ENCODE measurements at regions of chr2 and their contacts with region 1.

Region 1: GRCh38 chr2:127064642-127065250 is 42.2 kb downstream of the BIN1 start:
- DNase-seq: peak; percentile 92 to 98 (median 97)
- H3K4me3 ChIP-seq: no peak overlapping the region
- H3K27ac ChIP-seq: peak overlapping the region; percentile 6 to 87 (median 85)
- H3K4me1 ChIP-seq: peaks cover 30 to 39% of the 10 kb centered on the region in 2 donors
- H3K27me3 ChIP-seq: no peaks in the 10 kb centered on the region
- CTCF ChIP-seq: peak in 4 of 6 experiments; percentile 7 to 16 (median 8)
- POLR2A ChIP-seq: peak in 1 of 2 donors; percentile 75

Region 2: DNA sequence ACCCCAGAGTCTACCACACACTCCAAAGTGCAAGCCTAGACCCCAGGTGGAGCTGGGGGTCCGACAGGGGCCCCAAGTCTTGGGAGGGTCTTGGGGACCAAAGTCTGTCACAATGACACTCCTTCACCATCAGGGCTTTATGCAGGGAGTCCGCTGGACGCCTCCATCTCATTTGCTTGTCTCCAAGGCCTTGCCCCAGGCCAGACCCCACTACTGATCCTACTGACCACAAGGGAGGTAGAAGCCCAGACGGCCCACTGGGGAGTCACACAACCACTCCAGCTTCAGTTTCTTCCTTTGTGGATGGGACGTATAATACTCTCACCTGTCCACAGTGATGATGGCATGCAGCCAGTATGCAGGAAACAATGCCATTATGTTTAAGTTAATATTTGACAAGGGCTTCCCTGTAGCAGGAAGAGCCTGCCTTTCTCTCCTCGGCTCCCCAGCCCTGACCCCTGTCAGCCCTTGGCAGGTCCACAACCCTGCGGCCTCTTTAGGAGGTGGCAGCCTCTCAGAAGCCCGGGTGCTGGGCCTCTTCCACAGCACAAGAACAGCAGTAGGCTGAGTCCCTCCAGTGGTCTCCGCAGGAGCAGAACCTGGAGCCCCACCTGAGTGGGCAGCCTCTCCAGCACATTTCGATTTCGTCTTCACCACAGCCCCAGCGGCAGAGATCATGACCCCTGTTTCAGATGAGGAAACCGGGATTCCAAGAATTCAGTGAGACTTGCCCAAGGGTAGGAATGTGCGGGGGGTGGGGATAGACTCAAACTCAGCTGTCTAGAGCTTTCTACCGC is 35.7 kb after region 1 on chr2:
- intact Hi-C with region 1: loop called (anchors 5 kb)
- DNase-seq: peak in 4 of 7 donors; percentile 29 to 52 (median 42)
- H3K4me3 ChIP-seq: no peak overlapping the region
- H3K27ac ChIP-seq: peak overlapping the region in 2 of 5 donors; percentile 54 to 58
- H3K4me1 ChIP-seq: peaks cover 66 to 75% of the 10 kb centered on the region in 2 donors
- H3K27me3 ChIP-seq: no peaks in the 10 kb centered on the region
- CTCF ChIP-seq: no peak
- POLR2A ChIP-seq: peak in 1 of 2 donors; percentile 9

Region 3: DNA sequence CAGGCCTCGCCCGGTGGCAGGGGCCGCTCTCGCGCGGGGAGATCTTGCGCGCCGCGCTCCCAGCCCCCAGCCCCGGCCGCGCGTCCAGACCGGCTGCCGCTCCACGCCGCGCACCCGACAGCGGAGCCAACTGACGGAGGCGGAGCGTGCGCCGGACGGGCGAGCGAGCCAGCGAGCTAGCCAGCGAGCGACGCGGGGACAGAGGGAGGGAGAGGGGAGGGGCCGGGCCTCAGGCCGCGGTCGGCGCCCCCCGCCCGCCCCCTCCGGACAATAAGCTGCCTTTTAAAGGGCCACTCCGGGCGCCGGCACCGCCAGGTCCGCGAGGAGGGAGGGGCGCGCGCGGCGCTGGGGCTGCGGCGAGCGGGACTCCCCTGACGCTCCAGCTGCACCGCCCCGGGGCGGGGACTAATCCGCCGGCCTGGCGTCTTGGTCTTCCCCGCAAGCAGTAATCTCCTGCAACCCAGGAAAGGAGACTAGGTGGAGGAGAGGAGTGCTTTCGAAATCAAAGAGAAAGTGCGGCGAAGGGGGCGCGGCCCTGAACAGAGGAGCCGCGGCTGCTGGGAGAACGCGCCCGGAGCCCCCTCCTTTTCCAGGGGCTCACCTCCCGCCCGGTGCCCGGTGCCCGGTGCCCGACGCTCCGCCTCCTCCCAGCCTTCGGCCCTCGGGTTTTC is 42.3 kb after region 1 on chr2 and contains the start of gene BIN1:
- intact Hi-C with region 1: loop called (anchors 5 kb)
- DNase-seq: peak; percentile 87 to 96 (median 93)
- H3K4me3 ChIP-seq: peak within 1 kb of the TSS; percentile 78 to 95 (median 92)
- H3K27ac ChIP-seq: peak within 1 kb of the TSS; percentile 60 to 93 (median 89)
- H3K4me1 ChIP-seq: peaks cover 24 to 45% of the 10 kb centered on the region in 2 donors
- H3K27me3 ChIP-seq: no peaks in the 10 kb centered on the region
- CTCF ChIP-seq: no peak
- POLR2A ChIP-seq: peak; percentile 94 to 97
- total RNA-seq, gene BIN1: 62.1 to 207 (median 126) TPM

Region 4: GRCh38 chr2:127293748-127294562 is 229.2 kb after region 1 on chr2 and contains the start of gene ERCC3:
- intact Hi-C with region 1: loop called in 1 of 2 experiments (anchors 10 kb)
- DNase-seq: peak; percentile 69 to 85 (median 81)
- H3K4me3 ChIP-seq: peak within 1 kb of the TSS; percentile 27 to 99 (median 96)
- H3K27ac ChIP-seq: peak within 1 kb of the TSS in 4 of 5 donors; percentile 54 to 90 (median 72)
- H3K4me1 ChIP-seq: peaks cover 7 to 16% of the 10 kb centered on the region in 2 donors
- H3K27me3 ChIP-seq: no peaks in the 10 kb centered on the region
- CTCF ChIP-seq: no peak
- POLR2A ChIP-seq: peak in 1 of 2 donors; percentile 29
- total RNA-seq, gene ERCC3: 26.7 to 65.8 (median 37.4) TPM

Measured in adrenal gland (tissue), 19 donors.